Activated CD4-positive, alpha-beta T cell treated with anti-CD3 and anti-CD28 coated beads for 36 hours (primary cell): ENCODE measurements at regions of chr18 and their contacts with region 1.

Region 1: DNA sequence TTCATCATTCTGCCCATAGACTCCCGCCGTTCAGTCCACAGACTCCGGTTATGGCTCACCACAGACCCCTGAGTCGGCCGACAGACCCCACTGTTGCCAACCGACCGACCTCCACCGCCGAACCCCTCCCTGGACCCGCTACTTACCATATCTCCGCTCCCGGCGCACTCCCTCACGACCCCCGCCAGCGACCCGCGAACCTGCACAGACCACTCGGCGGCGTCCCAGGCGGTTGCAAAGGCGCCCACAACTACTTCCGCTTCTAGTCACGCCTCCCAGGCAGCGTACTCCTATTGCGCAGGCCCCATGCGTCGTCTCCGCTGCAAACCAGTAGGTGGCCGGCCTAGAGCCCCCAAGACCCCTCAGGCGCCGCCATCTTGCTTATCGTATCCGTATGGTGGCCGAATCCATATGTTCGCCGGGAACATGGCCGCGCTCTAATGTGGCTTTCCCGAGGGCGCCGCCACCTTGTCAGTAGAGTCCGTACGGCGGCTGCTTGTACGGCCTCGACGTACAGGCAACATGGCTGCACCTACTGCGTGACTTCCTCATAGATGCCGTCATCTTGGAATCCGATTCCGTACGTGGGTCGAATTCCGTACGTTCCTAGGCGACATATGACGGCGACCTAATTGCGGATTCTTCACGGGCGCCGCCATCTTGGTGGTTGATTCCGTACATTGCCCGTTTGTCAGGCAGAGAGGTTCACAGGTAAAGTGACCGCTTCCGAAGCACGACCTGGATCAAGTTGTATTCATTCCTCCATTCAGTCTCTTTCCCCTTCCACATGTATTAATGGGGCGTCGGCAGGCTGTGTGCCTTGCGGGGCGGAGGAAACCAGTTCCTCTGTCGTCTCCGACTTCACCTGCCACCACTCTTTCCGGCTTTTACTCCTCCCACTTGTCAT is at the start of gene CXXC1:
- DNase-seq: peak; percentile 98
- ATAC-seq: peak; percentile 92
- H3K4me3 Mint-ChIP-seq: peak within 1 kb of the TSS; percentile 92
- H3K27ac Mint-ChIP-seq: peak within 1 kb of the TSS; percentile 97
- H3K4me1 Mint-ChIP-seq: peaks cover 26% of the 10 kb centered on the region
- H3K27me3 Mint-ChIP-seq: no peaks in the 10 kb centered on the region
- total RNA-seq, gene CXXC1: 68.6 to 80.0 TPM

Region 2: GRCh38 chr18:49459404-49460171 is 828.1 kb before region 1 on chr18:
- CTCF ChIA-PET with region 1: no interaction called
- POLR2A ChIA-PET with region 1: no interaction called
- intact Hi-C with region 1: loop called in 1 of 2 experiments (anchors 1 kb)
- DNase-seq: peak; percentile 59
- ATAC-seq: peak; percentile 43
- H3K4me3 Mint-ChIP-seq: peak overlapping the region; percentile 82
- H3K27ac Mint-ChIP-seq: peak overlapping the region; percentile 69
- H3K4me1 Mint-ChIP-seq: peaks cover 36% of the 10 kb centered on the region
- H3K27me3 Mint-ChIP-seq: no peaks in the 10 kb centered on the region

Region 3: DNA sequence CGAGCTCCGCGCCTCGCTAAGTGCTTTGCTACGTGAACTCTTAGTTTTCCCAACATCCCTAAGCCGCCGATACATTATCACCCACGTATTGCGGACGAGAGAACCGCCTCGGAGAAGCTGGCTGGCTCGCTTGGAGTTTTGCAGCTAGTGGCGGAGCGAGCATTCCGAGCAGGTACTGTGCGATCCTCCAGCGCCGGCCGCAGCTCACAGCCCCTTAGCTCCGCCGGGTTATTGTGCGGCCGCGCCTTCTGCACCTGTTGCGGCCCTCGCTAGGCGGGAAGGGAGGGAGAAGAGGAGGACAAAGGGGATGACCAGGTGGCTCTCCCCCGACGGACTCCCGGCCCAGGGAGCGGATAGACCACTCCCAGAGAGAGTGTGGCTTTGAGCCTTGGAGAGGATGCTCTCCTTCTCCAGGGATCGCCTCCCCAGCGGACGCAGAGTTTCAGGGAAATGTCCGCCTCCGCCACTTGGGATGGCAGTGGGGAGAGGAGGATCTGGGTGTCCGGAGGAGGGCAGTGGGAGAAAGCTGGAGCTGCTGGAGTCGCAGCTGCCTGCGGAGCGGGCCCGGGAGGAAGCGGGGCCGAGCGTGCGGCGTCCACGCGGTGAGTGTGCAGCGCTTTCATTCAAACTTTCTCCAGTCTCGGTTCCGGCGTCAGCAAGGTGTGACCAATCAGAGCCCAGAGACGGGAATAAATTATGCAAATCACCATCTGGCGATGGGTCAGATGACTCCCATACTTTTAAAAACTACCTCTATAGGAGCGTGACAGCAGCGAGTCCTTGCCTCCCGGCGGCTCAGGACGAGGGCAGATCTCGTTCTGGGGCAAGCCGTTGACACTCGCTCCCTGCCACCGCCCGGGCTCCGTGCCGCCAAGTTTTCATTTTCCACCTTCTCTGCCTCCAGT is 726.2 kb before region 1 on chr18 and contains the start of gene LIPG:
- CTCF ChIA-PET with region 1: no interaction called
- POLR2A ChIA-PET with region 1: no interaction called
- intact Hi-C with region 1: loop called in 1 of 2 experiments (anchors 5 kb)
- DNase-seq: peak; percentile 79
- ATAC-seq: peak; percentile 86
- H3K4me3 Mint-ChIP-seq: peak within 1 kb of the TSS; percentile 63
- H3K27ac Mint-ChIP-seq: peak within 1 kb of the TSS; percentile 49
- H3K4me1 Mint-ChIP-seq: peaks cover 32% of the 10 kb centered on the region
- H3K27me3 Mint-ChIP-seq: peaks cover 59% of the 10 kb centered on the region
- total RNA-seq, gene LIPG: 0.71 to 0.79 TPM

Region 4: DNA sequence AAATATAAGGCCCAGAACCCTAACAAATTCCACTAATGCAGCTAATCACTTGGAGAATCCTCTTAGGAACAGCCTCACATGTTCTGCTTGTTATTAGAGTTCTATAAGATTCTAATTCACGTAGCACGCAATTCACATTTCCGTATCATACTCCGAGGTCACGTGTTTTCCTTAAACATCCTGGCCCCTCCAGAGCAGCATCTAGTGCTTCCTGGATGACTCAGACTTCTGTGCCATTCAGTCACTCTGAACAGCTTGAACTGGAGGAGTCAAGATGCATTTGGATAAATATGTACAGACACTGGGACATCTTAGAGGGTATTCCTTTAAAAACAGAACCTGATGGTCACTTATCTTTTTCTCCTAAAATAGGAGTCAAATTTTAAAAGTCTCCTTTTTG is 249.2 kb before region 1 on chr18:
- CTCF ChIA-PET with region 1: no interaction called
- POLR2A ChIA-PET with region 1: no interaction called
- intact Hi-C with region 1: no loop called
- DNase-seq: peak; percentile 10
- ATAC-seq: peak; percentile 81
- H3K4me3 Mint-ChIP-seq: no peak overlapping the region
- H3K27ac Mint-ChIP-seq: no peak overlapping the region
- H3K4me1 Mint-ChIP-seq: no peaks in the 10 kb centered on the region
- H3K27me3 Mint-ChIP-seq: peaks cover 9% of the 10 kb centered on the region

Region 5: GRCh38 chr18:50266248-50266704 is 21.4 kb before region 1 on chr18 and contains the start of gene CFAP53:
- CTCF ChIA-PET with region 1: interaction called, 5 read pairs
- POLR2A ChIA-PET with region 1: no interaction called
- intact Hi-C with region 1: loop called (anchors 1 kb)
- DNase-seq: peak; percentile 92
- ATAC-seq: peak; percentile 93
- H3K4me3 Mint-ChIP-seq: peak within 1 kb of the TSS; percentile 71
- H3K27ac Mint-ChIP-seq: peak within 1 kb of the TSS; percentile 57
- H3K4me1 Mint-ChIP-seq: peaks cover 20% of the 10 kb centered on the region
- H3K27me3 Mint-ChIP-seq: no peaks in the 10 kb centered on the region
- total RNA-seq, gene CFAP53: 0.37 to 0.44 TPM

Region 6: DNA sequence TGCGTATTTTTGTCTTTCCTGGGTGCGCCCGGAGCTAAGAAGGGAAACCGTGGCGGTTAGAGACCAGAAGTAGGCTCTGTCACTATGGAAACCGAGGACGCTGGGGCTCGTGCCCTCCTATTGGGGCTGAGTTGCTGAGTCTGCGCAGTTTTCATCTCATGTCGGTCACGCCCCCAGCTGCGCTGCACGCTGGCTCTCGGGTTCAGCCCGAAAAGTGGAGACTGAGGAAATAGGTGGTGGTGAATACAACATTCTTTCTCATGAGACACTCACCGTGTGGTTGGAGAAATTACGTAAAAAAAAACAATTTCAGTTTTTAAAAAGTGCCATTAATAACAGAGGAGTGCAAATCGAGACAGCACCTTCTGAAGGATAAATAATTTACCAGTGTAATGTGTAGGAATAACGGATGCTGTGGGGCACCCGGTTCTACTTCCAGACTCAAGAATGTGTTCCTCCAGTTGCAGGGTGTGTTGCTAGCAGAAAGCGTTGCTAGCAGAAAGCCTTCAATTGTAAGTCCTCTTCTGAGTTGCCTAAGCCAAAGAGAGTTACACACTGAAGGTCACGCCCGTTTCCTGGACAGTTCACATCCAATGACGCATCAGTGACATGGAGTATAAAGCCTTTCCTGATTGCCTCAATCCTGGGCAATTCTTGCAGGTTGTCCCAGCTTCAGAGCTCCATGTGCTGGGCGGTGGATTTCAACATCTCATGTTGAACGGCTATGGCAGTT is 20.2 kb after region 1 on chr18:
- CTCF ChIA-PET with region 1: no interaction called
- POLR2A ChIA-PET with region 1: no interaction called
- intact Hi-C with region 1: loop called (anchors 1 kb)
- DNase-seq: peak; percentile 95
- ATAC-seq: peak; percentile 99
- H3K4me3 Mint-ChIP-seq: peak overlapping the region; percentile 73
- H3K27ac Mint-ChIP-seq: peak overlapping the region; percentile 37
- H3K4me1 Mint-ChIP-seq: peaks cover 11% of the 10 kb centered on the region
- H3K27me3 Mint-ChIP-seq: peaks cover 3% of the 10 kb centered on the region

Region 7: GRCh38 chr18:50374753-50375391 is 87.2 kb after region 1 on chr18 and contains the start of gene SKA1:
- CTCF ChIA-PET with region 1: no interaction called
- POLR2A ChIA-PET with region 1: no interaction called
- intact Hi-C with region 1: loop called (anchors 1 kb)
- DNase-seq: peak; percentile 96
- ATAC-seq: peak; percentile 99
- H3K4me3 Mint-ChIP-seq: peak within 1 kb of the TSS; percentile 83
- H3K27ac Mint-ChIP-seq: peak within 1 kb of the TSS; percentile 79
- H3K4me1 Mint-ChIP-seq: peaks cover 2% of the 10 kb centered on the region
- H3K27me3 Mint-ChIP-seq: peaks cover under 1% of the 10 kb centered on the region
- total RNA-seq, gene SKA1: 38.6 to 48.3 TPM

Region 8: GRCh38 chr18:51197661-51198424 is 910.1 kb after region 1 on chr18 and contains the start of gene MEX3C:
- CTCF ChIA-PET with region 1: no interaction called
- POLR2A ChIA-PET with region 1: no interaction called
- intact Hi-C with region 1: loop called in 1 of 2 experiments (anchors 2 kb)
- DNase-seq: peak; percentile 100
- ATAC-seq: peak; percentile 86
- H3K4me3 Mint-ChIP-seq: peak within 1 kb of the TSS; percentile 95
- H3K27ac Mint-ChIP-seq: peak within 1 kb of the TSS; percentile 96
- H3K4me1 Mint-ChIP-seq: peaks cover 25% of the 10 kb centered on the region
- H3K27me3 Mint-ChIP-seq: no peaks in the 10 kb centered on the region
- total RNA-seq, gene MEX3C: 46.7 to 66.9 TPM